MCF 10A (cell line): ENCODE measurements at regions of chr1 and their contacts with region 1.

Region 1: GRCh38 chr1:66978201-66978600 is 53.4 kb downstream of the MIER1 start:
- DNase-seq: no peak
- H3K4me3 Mint-ChIP-seq: no peak overlapping the region
- H3K27ac Mint-ChIP-seq: no peak overlapping the region
- H3K4me1 Mint-ChIP-seq: no peaks in the 10 kb centered on the region
- H3K27me3 Mint-ChIP-seq: no peaks in the 10 kb centered on the region
- CTCF ChIP-seq: no peak

Region 2: DNA sequence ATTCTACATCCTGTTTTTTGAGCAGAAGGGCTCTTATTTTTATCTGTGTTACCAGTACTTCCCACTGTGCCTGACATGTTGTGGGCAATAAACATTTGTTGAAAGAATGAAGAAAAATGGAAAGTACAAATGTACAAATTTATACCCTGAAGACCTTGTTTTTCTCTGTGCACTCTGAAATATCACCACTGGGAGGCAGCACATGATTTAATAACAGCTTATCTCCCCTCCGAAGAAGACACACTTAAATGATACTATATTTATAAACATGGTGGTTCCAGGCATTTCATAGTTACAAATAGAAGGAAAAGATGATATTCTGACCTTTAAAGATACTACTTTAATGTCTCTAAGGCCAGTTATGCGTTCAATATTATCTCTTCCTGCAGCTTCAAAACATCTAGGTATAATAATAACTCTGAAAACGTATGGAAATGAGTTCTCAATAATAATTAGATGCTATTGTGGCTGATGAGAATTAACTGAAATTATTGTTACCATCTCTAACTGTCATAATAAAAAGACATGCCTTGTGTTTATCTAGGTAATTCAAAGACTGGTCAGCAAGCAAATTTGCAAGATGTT is 213.1 kb before region 1 on chr1:
- CTCF ChIA-PET with region 1: interaction called, 3 read pairs
- POLR2A ChIA-PET with region 1: no interaction called
- intact Hi-C with region 1: loop called (anchors 5 kb)
- DNase-seq: peak; percentile 65
- H3K4me3 Mint-ChIP-seq: no peak overlapping the region
- H3K27ac Mint-ChIP-seq: no peak overlapping the region
- H3K4me1 Mint-ChIP-seq: no peaks in the 10 kb centered on the region
- H3K27me3 Mint-ChIP-seq: no peaks in the 10 kb centered on the region
- CTCF ChIP-seq: peak; percentile 78